Activated B cell treated with CpG ODN at 0.5 μM for 24 hours (primary cell): ENCODE measurements at regions of chrX and their contacts with region 1.

Region 1: DNA sequence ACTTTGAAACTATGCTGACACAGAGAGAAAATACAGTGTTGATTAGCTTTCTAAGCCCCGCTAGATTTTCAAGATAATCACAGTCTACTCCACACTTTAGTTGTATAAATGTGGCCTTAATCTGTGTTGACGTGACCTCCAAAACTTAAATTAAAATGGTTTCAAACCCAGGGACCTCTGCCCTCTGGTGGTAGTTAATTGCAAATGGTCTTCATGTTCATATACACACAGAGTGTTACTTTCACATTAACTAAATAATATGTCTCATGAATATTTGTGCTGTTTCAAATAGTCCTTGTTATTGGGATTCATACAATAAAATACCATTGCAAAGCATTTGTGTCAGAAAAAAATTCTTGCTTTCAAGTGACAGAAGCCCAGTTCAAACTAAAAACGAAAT is 64.3 kb downstream of the TASL start:
- DNase-seq: no peak
- ATAC-seq: no peak
- H3K4me3 Mint-ChIP-seq: no peak overlapping the region
- H3K27ac Mint-ChIP-seq: no peak overlapping the region
- H3K4me1 Mint-ChIP-seq: peaks cover 1% of the 10 kb centered on the region
- H3K27me3 Mint-ChIP-seq: no peaks in the 10 kb centered on the region
- CTCF ChIP-seq: no peak

Region 2: DNA sequence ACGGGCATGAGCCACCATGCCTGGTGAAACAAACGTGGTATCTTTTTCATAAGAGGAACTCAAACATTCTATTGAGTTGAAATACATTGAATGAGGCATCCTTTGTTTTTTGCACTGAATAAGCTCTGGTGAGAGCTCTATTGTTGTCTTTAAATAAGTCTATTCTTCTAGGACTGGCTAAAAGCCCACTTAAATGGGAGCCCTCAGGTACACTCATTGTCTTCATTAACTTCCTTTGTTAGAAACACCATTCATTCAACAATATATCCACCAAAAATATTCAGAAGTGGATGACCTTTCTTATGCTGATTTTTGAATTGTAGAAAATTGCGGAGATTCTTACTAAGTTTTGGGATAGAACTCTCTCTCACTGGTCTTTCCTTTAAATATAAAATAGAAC is 1358.0 kb before region 1 on chrX:
- CTCF ChIA-PET with region 1: no interaction called
- POLR2A ChIA-PET with region 1: no interaction called
- intact Hi-C with region 1: no loop called
- DNase-seq: no peak
- ATAC-seq: no peak
- H3K4me3 Mint-ChIP-seq: no peak overlapping the region
- H3K27ac Mint-ChIP-seq: no peak overlapping the region
- H3K4me1 Mint-ChIP-seq: no peaks in the 10 kb centered on the region
- H3K27me3 Mint-ChIP-seq: no peaks in the 10 kb centered on the region
- CTCF ChIP-seq: no peak

Region 3: DNA sequence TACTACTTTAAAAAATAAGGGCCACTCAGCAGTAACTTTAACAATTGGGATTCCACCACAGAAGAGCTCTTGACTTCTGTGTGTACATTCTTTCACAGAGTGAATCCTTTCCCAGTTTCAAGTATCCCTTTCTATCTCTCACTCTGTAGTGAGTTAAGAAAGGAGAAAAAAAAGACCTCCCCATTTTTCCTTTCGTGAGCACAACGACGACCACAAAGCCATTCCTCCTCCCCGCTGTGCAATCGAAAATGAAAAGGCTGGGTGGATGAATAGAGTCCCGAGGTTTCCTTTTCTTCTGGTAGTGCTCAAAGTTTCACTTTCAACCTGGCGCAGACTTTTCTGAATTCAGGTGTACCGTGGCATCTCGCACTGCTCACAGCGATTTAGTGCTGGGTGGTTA is 317.8 kb after region 1 on chrX:
- CTCF ChIA-PET with region 1: no interaction called
- POLR2A ChIA-PET with region 1: interaction called, 11 read pairs
- intact Hi-C with region 1: no loop called
- DNase-seq: no peak
- ATAC-seq: no peak
- H3K4me3 Mint-ChIP-seq: no peak overlapping the region
- H3K27ac Mint-ChIP-seq: no peak overlapping the region
- H3K4me1 Mint-ChIP-seq: peaks cover 4% of the 10 kb centered on the region
- H3K27me3 Mint-ChIP-seq: no peaks in the 10 kb centered on the region
- CTCF ChIP-seq: no peak